Panc1 (cell line): ENCODE measurements at regions of chr19 and their contacts with region 1.

Region 1: DNA sequence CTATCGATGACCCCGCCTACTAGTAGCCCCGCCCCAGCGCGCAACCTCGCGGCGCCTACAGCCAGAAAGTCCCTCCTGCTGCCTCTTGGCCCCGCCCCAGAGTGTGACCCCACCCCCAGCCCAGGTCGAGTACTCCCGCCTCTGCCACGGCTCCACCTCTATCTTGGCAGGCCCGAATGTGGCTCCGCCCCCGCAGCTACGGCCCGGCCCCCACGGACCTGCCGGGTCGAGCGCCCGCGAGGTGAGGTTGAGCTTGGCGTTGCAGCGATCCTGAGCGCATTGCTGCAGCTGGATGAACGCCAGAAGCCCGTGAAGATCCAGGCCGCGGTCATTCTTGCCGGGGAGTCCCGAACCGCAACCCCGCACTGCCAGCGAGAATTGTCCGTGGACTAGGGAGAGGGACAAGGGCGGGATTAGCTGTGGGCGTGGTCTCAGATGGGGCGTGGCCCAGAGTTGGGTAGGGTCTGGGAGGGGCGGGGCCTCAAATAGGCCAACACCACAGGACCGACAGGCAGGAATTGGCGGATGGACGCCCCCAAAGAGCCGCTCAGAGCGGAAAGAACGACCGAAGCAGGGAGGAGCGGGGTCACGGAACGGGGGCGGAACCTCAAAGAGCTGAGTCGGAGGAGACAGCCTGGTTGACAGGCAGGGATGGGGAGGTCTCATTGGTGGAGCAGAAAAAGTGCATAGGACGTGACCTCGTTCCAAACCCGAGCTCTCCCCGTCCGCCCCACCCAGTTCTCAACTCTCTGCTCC is 1.8 kb downstream of the LYPD3 start:
- DNase-seq: no peak
- ATAC-seq: peak; percentile 95
- H3K4me3 ChIP-seq: peak overlapping the region; percentile 57 to 72
- H3K27ac ChIP-seq: no peak overlapping the region; the same call in 1 of the 2 replicates
- H3K4me1 ChIP-seq: peaks cover 3% of the 10 kb centered on the region; the same call in 1 of the 2 replicates
- H3K27me3 ChIP-seq: no peaks in the 10 kb centered on the region
- CTCF ChIP-seq: no peak

Region 2: DNA sequence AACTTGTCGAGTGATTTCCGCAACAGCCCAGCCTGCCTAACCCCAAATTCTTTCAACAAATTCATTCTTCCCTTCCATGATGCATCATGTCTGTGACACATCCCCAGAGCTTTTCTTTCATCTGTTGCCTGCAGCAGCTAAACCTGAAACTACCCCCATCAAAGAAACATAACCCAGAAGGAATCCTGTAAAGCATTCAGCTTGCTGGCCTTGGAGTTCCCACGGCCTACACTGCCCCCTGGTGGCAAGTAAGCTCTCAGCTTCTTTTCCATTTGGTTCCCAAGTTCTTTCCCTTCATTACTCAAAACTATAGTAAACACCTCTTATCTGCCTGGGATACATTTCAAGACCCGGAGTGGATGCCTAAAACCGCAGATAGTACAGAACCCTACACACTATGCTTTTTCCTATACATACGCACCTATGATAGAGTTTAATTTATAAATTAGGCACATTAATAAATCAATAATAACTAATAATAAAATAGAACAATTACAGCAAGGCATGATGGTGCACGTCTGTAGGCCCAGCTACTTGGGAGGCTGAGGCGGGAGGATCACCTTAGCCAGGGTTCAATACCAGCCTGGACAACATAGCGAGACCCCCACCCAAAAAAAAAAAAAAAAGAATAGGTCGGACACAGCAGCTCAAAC is 56.0 kb after region 1 on chr19:
- CTCF ChIA-PET with region 1: interaction called, 12 read pairs
- POLR2A ChIA-PET with region 1: interaction called, 7 read pairs
- in situ Hi-C with region 1: no loop called
- intact Hi-C with region 1: no loop called
- DNase-seq: peak; percentile 43
- ATAC-seq: peak; percentile 87
- H3K4me3 ChIP-seq: no peak overlapping the region
- H3K27ac ChIP-seq: no peak overlapping the region
- H3K4me1 ChIP-seq: no peaks in the 10 kb centered on the region
- H3K27me3 ChIP-seq: no peaks in the 10 kb centered on the region
- CTCF ChIP-seq: peak; percentile 82

Region 3: DNA sequence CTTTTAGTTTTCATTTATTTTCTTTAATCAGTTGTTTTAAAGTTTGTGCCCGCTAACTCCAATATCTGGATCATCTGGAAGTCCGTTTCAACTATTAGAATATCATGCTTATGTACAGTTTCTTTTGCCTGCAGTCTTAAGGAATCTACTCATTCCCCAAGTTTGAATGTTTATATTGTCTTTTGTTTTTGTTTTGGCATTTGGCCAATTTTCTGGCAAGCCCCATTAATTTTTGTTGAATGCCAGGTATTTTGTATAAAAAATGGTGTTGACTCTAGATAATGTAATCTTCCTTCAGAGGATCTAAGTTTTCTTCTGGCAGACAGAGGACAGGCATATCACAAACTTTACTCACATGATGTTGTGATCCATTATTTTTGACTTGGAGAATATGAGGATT is 852.3 kb after region 1 on chr19:
- CTCF ChIA-PET with region 1: no interaction called
- POLR2A ChIA-PET with region 1: interaction called, 25 read pairs
- in situ Hi-C with region 1: no loop called
- intact Hi-C with region 1: no loop called
- DNase-seq: no peak
- ATAC-seq: no peak
- H3K4me3 ChIP-seq: no peak overlapping the region
- H3K27ac ChIP-seq: no peak overlapping the region
- H3K4me1 ChIP-seq: no peaks in the 10 kb centered on the region
- H3K27me3 ChIP-seq: no peaks in the 10 kb centered on the region
- CTCF ChIP-seq: no peak